Stomach (tissue), 19 donors: ENCODE measurements at regions of chr1 and their contacts with region 1.

Region 1: GRCh38 chr1:107748531-107748930 is 216.4 kb downstream of the VAV3 start:
- DNase-seq: peak in 1 of 2 donors; percentile 50
- H3K4me3 ChIP-seq: no peak overlapping the region
- H3K27ac ChIP-seq: no peak overlapping the region
- H3K4me1 ChIP-seq: peaks cover 0 to 4% (median 0%) of the 10 kb centered on the region in 4 donors
- H3K27me3 ChIP-seq: no peaks in the 10 kb centered on the region
- CTCF ChIP-seq: peak in 3 of 7 experiments; percentile 7 to 25 (median 25)
- EP300 ChIP-seq: no peak
- POLR2A ChIP-seq: no peak

Region 2: GRCh38 chr1:107420559-107420958 is 328.0 kb before region 1 on chr1:
- intact Hi-C with region 1: loop called (anchors 10 kb)
- DNase-seq: no peak
- H3K4me3 ChIP-seq: no peak overlapping the region
- H3K27ac ChIP-seq: no peak overlapping the region
- H3K4me1 ChIP-seq: no peaks in the 10 kb centered on the region
- H3K27me3 ChIP-seq: no peaks in the 10 kb centered on the region
- CTCF ChIP-seq: no peak
- EP300 ChIP-seq: no peak
- POLR2A ChIP-seq: no peak